Activated CD8-positive, alpha-beta memory T cell treated with anti-CD3 and anti-CD28 coated beads, Interleukin-2, amount 10 ng/mL, durations not matched to agents 7 days and 5 days (primary cell): ENCODE measurements at regions of chr3 and their contacts with region 1.

Region 1: GRCh38 chr3:48439820-48440589 is at the starts of genes CCDC51 and TMA7:
- DNase-seq: peak; percentile 99
- ATAC-seq: peak; percentile 96
- H3K4me3 Mint-ChIP-seq: peak within 1 kb of the TSS; percentile 97
- H3K27ac Mint-ChIP-seq: peak within 1 kb of the TSS; percentile 97
- H3K4me1 Mint-ChIP-seq: peaks cover 45% of the 10 kb centered on the region
- H3K27me3 Mint-ChIP-seq: no peaks in the 10 kb centered on the region
- total RNA-seq, gene CCDC51: 18.4 to 21.9 TPM
- total RNA-seq, gene TMA7: 219 to 298 TPM

Region 2: DNA sequence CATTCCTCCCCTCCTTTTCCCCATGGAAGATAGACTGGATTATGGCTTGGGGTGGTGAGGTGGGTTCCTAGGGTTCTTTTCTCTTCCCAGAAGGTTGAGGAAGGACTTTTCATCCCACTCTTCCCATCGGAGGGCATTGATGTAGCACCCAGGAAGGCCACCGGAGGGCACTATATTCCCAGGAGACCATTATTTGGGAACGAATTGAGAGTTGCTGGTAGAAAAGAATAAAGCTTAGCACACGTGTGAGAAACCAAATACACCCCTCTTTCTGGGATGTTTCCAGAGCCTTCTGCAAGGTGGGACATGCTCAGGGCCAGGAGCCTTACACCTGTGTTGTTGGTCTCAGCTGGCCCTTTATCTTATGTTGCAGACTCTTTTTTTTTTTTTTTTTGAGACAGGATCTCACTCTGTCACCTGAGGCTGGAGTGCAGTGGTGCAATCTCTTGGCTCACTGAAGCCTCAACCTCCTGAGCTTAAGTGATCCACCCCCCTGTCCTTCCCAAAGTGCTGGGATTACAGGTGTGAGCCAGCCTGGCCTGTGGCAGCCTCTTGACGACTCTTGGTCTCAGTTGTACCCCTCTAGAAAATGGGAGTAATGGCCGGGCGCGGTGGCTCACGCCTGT is 245.4 kb before region 1 on chr3:
- CTCF ChIA-PET with region 1: interaction called, 24 read pairs
- DNase-seq: peak; percentile 50
- ATAC-seq: peak; percentile 33
- H3K4me3 Mint-ChIP-seq: no peak overlapping the region
- H3K27ac Mint-ChIP-seq: no peak overlapping the region
- H3K4me1 Mint-ChIP-seq: peaks cover 6% of the 10 kb centered on the region
- H3K27me3 Mint-ChIP-seq: peaks cover 12% of the 10 kb centered on the region

Region 3: DNA sequence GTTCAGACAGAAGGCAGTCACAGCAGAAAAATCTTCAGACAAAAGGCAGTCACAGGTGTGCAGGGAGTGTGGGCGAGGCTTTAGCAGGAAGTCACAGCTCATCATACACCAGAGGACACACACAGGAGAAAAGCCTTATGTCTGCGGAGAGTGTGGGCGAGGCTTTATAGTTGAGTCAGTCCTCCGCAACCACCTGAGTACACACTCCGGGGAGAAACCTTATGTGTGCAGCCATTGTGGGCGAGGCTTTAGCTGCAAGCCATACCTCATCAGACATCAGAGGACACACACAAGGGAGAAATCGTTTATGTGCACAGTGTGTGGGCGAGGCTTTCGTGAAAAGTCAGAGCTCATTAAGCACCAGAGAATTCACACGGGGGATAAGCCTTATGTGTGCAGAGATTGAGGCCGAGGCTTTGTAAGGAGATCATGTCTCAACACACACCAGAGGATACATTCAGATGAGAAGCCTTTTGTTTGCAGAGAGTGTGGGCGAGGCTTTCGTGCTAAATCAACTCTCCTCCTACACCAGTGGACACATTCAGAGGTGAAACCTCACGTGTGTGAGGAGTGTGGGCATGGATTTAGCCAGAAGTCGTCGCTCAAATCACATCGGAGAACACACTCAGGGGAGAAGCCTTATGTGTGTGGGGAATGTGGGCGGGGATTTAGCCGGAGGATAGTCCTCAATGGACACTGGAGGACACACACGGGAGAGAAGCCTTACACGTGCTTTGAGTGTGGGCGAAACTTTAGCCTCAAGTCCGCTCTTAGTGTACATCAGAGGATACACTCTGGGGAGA is 171.4 kb before region 1 on chr3:
- CTCF ChIA-PET with region 1: interaction called, 61 read pairs
- DNase-seq: peak; percentile 90
- ATAC-seq: peak; percentile 98
- H3K4me3 Mint-ChIP-seq: peak overlapping the region; percentile 25
- H3K27ac Mint-ChIP-seq: peak overlapping the region; percentile 76
- H3K4me1 Mint-ChIP-seq: peaks cover 33% of the 10 kb centered on the region
- H3K27me3 Mint-ChIP-seq: no peaks in the 10 kb centered on the region

Region 4: GRCh38 chr3:48400824-48401433 is 39.1 kb before region 1 on chr3:
- CTCF ChIA-PET with region 1: interaction called, 161 read pairs
- DNase-seq: peak; percentile 73
- ATAC-seq: peak; percentile 83
- H3K4me3 Mint-ChIP-seq: no peak overlapping the region
- H3K27ac Mint-ChIP-seq: no peak overlapping the region
- H3K4me1 Mint-ChIP-seq: no peaks in the 10 kb centered on the region
- H3K27me3 Mint-ChIP-seq: peaks cover 4% of the 10 kb centered on the region

Region 5: GRCh38 chr3:48460517-48460902 is 20.5 kb after region 1 on chr3:
- CTCF ChIA-PET with region 1: interaction called, 176 read pairs
- DNase-seq: no peak
- ATAC-seq: no peak
- H3K4me3 Mint-ChIP-seq: no peak overlapping the region
- H3K27ac Mint-ChIP-seq: peak overlapping the region; percentile 66
- H3K4me1 Mint-ChIP-seq: peaks cover 19% of the 10 kb centered on the region
- H3K27me3 Mint-ChIP-seq: no peaks in the 10 kb centered on the region

Region 6: DNA sequence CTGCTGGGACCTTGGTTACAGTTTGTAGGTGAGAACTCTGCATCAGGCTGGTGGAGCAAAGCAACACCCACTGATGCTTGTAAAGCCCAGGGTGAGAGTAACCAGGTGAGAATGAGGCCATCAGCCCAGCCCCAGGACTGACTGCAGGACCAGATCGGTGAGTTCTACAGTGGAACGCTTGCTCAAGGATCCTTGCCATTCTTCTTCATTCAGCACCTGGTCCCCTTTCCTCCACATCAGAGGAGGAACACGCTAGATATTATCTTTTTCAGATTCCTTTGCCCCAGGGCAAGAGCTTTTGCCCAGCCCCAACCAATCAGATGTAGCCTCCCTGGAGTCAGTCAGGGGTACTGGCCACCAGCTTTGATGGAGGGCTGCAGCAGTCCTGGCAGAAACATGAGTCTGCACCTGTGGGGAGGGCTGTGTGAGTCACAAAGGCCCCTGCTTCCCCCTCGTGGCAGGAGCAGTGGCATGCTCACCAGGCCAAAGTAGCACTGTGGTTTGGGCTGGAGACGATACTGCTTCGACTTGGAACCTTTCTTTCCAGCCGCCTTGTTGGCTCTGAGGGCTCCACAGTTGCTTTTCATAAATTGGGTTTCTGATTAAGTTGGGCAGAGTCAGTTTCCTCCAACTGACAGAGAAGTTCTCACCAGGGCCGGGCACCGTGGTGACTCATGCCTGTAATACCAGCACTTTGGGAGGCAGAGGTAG is 67.5 kb after region 1 on chr3:
- CTCF ChIA-PET with region 1: interaction called, 110 read pairs
- DNase-seq: peak; percentile 89
- ATAC-seq: peak; percentile 83
- H3K4me3 Mint-ChIP-seq: peak overlapping the region; percentile 16
- H3K27ac Mint-ChIP-seq: peak overlapping the region; percentile 77
- H3K4me1 Mint-ChIP-seq: peaks cover 40% of the 10 kb centered on the region
- H3K27me3 Mint-ChIP-seq: peaks cover 6% of the 10 kb centered on the region

Region 7: GRCh38 chr3:48573973-48574585 is 134.1 kb after region 1 on chr3:
- CTCF ChIA-PET with region 1: no interaction called
- DNase-seq: no peak
- ATAC-seq: no peak
- H3K4me3 Mint-ChIP-seq: no peak overlapping the region
- H3K27ac Mint-ChIP-seq: no peak overlapping the region
- H3K4me1 Mint-ChIP-seq: no peaks in the 10 kb centered on the region
- H3K27me3 Mint-ChIP-seq: no peaks in the 10 kb centered on the region

Region 8: DNA sequence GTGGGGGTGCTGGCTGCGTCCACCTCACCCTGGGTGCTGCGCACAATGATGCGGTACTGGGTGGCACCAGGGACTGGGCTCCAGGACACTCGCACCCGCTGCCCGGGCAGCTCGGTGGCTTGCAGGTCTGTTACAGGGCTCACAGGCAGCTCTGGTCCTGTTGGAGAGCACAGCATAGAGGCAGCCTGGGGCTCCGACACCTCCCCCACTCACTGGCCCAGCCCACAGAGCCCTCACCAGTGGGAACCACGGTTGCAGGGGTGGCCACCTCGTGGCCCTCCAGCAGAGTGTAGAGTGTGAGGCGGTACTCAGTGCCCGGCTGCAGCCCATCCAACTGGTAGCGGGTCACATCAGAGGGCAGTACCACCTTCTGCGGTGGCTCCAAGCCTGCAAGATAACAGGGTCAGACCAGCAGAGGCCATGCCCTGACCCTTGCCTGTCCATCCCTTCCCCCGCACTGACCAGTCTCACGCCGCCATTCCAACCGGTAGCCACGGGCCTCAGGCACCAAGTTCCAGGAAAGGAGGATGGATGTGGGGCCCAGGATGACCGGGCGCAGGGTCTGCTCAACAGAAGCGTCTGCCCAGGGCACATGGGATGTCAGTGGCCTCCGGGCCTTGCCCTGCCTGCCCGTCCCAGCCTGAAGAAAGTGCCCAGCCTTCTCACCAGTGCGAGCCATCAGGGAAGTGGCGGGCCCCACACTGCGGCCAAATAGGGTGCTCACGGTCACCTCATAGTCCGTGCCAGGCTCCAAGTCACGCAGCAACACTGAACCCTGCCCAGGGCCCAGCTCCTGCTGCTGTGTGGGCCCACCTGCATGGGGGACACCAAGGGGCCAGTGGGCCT is 151.7 kb after region 1 on chr3:
- CTCF ChIA-PET with region 1: no interaction called
- DNase-seq: no peak
- ATAC-seq: no peak
- H3K4me3 Mint-ChIP-seq: no peak overlapping the region
- H3K27ac Mint-ChIP-seq: no peak overlapping the region
- H3K4me1 Mint-ChIP-seq: no peaks in the 10 kb centered on the region
- H3K27me3 Mint-ChIP-seq: peaks cover 36% of the 10 kb centered on the region